Activated B cell treated with CpG ODN at 0.5 μM for 24 hours (primary cell): ENCODE measurements at regions of chr15 and their contacts with region 1.

Region 1: GRCh38 chr15:45166834-45167630 is 20.7 kb downstream of the SHF start:
- DNase-seq: peak; percentile 75
- ATAC-seq: peak; percentile 95
- H3K4me3 Mint-ChIP-seq: peak overlapping the region; percentile 81
- H3K27ac Mint-ChIP-seq: peak overlapping the region; percentile 80
- H3K4me1 Mint-ChIP-seq: peaks cover 32% of the 10 kb centered on the region
- H3K27me3 Mint-ChIP-seq: no peaks in the 10 kb centered on the region
- CTCF ChIP-seq: no peak

Region 2: GRCh38 chr15:44087572-44088465 is 1079.2 kb before region 1 on chr15:
- CTCF ChIA-PET with region 1: no interaction called
- POLR2A ChIA-PET with region 1: no interaction called
- intact Hi-C with region 1: no loop called
- DNase-seq: no peak
- ATAC-seq: no peak
- H3K4me3 Mint-ChIP-seq: no peak overlapping the region
- H3K27ac Mint-ChIP-seq: no peak overlapping the region
- H3K4me1 Mint-ChIP-seq: peaks cover 9% of the 10 kb centered on the region
- H3K27me3 Mint-ChIP-seq: peaks cover 3% of the 10 kb centered on the region
- CTCF ChIP-seq: no peak

Region 3: GRCh38 chr15:44719293-44719999 is 447.6 kb before region 1 on chr15:
- CTCF ChIA-PET with region 1: no interaction called
- POLR2A ChIA-PET with region 1: no interaction called
- intact Hi-C with region 1: no loop called
- DNase-seq: no peak
- ATAC-seq: peak; percentile 64
- H3K4me3 Mint-ChIP-seq: peak overlapping the region; percentile 72
- H3K27ac Mint-ChIP-seq: peak overlapping the region; percentile 98
- H3K4me1 Mint-ChIP-seq: peaks cover 93% of the 10 kb centered on the region
- H3K27me3 Mint-ChIP-seq: no peaks in the 10 kb centered on the region
- CTCF ChIP-seq: no peak

Region 4: DNA sequence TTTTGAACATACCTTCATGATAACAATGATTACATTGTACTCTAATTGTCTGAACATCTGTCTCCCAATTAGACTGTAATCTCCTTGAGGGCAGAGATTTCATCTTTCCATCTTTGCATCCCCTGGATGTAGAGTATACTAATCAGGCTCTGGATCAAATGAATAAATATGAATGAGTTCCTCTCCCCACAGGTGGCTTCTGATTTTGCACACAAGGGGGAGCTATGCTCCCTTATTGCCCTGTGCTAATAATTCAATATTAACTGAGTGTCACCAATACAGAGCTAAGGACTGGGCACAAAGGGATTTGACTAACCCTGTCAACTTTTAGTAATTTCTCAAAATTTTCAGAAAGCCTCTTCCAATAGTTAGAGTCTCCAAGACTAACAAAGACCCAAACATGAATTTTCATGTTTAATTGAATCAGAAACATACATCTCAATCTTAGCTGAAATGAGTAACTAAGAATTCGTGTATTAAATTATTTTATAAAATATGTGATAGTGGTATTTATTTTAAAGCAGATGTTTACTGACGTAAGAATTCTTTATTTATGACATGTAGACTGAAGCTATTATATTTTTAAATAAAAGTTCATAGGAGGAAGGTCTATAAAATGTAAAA is 40.4 kb before region 1 on chr15:
- CTCF ChIA-PET with region 1: interaction called, 11 read pairs
- POLR2A ChIA-PET with region 1: no interaction called
- intact Hi-C with region 1: no loop called
- DNase-seq: no peak
- ATAC-seq: peak; percentile 68
- H3K4me3 Mint-ChIP-seq: no peak overlapping the region
- H3K27ac Mint-ChIP-seq: no peak overlapping the region
- H3K4me1 Mint-ChIP-seq: peaks cover 7% of the 10 kb centered on the region
- H3K27me3 Mint-ChIP-seq: peaks cover 59% of the 10 kb centered on the region
- CTCF ChIP-seq: no peak

Region 5: DNA sequence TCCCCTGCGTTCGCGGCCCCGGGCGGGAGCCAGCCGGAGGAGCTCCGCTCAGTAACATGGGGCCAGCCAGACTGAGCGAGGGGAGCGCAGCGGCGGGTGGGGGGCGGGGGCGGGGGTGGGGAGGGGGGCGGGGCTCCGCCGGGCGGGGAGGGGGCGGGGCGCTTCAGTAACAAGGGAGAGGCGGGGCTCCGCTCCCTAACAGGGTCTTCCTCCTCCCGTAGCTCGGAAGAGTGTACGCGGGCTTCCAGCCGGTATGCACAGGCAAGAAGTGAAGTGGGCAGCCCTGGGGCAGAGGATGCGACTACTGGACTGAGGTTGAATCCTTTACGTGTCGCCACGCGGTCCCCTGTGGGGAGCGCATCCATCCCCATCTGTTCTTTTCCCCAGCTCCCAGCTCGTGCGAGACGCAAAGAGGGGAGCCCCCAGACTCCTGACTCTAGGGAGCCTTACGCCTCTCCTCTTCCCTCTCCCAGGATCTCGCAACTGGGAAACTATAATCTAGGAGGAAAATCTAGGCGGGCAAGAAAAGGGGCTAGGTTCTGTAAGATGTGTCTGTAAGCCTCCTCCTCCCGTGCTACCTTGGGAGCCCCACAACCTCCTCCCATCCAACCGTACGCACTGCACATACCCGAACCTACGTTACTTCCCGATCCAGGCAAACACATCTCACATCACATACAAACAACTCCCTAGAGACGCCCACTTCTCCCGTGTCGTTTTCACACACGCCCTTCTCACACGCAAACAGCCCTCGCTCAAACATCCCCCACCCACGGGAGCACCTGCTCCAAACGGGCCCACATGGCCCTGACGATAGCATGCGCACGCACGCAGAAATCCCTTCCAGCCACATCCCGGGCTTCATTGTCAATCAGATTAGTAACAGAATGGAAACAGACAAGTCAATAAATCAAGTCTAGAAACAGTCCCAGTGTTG is 21.1 kb after region 1 on chr15 and contains the start of gene SHF:
- CTCF ChIA-PET with region 1: interaction called, 6 read pairs
- POLR2A ChIA-PET with region 1: interaction called, 9 read pairs
- intact Hi-C with region 1: loop called (anchors 1 kb)
- DNase-seq: peak; percentile 55
- ATAC-seq: peak; percentile 78
- H3K4me3 Mint-ChIP-seq: peak within 1 kb of the TSS; percentile 89
- H3K27ac Mint-ChIP-seq: peak within 1 kb of the TSS; percentile 82
- H3K4me1 Mint-ChIP-seq: peaks cover 15% of the 10 kb centered on the region
- H3K27me3 Mint-ChIP-seq: peaks cover 2% of the 10 kb centered on the region
- CTCF ChIP-seq: no peak
- total RNA-seq, gene SHF: 5.8 and 8.5 TPM in 2 replicates

Region 6: GRCh38 chr15:45279024-45279698 is 112.1 kb after region 1 on chr15:
- CTCF ChIA-PET with region 1: interaction called, 4 read pairs
- POLR2A ChIA-PET with region 1: interaction called, 3 read pairs
- intact Hi-C with region 1: loop called (anchors 1 kb)
- DNase-seq: peak; percentile 99
- ATAC-seq: peak; percentile 99
- H3K4me3 Mint-ChIP-seq: peak overlapping the region; percentile 93
- H3K27ac Mint-ChIP-seq: peak overlapping the region; percentile 89
- H3K4me1 Mint-ChIP-seq: peaks cover 14% of the 10 kb centered on the region
- H3K27me3 Mint-ChIP-seq: no peaks in the 10 kb centered on the region
- CTCF ChIP-seq: no peak

Region 7: GRCh38 chr15:45291822-45292582 is 125.0 kb after region 1 on chr15:
- CTCF ChIA-PET with region 1: no interaction called
- POLR2A ChIA-PET with region 1: no interaction called
- intact Hi-C with region 1: no loop called
- DNase-seq: no peak
- ATAC-seq: no peak
- H3K4me3 Mint-ChIP-seq: no peak overlapping the region
- H3K27ac Mint-ChIP-seq: no peak overlapping the region
- H3K4me1 Mint-ChIP-seq: no peaks in the 10 kb centered on the region
- H3K27me3 Mint-ChIP-seq: peaks cover 9% of the 10 kb centered on the region
- CTCF ChIP-seq: no peak

Region 8: GRCh38 chr15:45587095-45587860 is 420.2 kb after region 1 on chr15 and contains the start of gene BLOC1S6:
- CTCF ChIA-PET with region 1: no interaction called
- POLR2A ChIA-PET with region 1: no interaction called
- intact Hi-C with region 1: loop called (anchors 1 kb)
- DNase-seq: peak; percentile 93
- ATAC-seq: peak; percentile 87
- H3K4me3 Mint-ChIP-seq: peak within 1 kb of the TSS; percentile 99
- H3K27ac Mint-ChIP-seq: peak within 1 kb of the TSS; percentile 100
- H3K4me1 Mint-ChIP-seq: peaks cover 44% of the 10 kb centered on the region
- H3K27me3 Mint-ChIP-seq: no peaks in the 10 kb centered on the region
- CTCF ChIP-seq: no peak
- total RNA-seq, gene BLOC1S6: 39.4 and 41.2 TPM in 2 replicates